OCI-LY7 (cell line): ENCODE measurements at regions of chr3 and their contacts with region 1.

Region 1: GRCh38 chr3:170357176-170357919 is at the start of gene SKIL:
- DNase-seq: peak; percentile 97
- H3K4me3 ChIP-seq: peak within 1 kb of the TSS; percentile 97
- H3K27ac ChIP-seq: peak within 1 kb of the TSS; percentile 94
- H3K4me1 ChIP-seq: peaks cover 54% of the 10 kb centered on the region
- CTCF ChIP-seq: no peak
- total RNA-seq, gene SKIL: 60.9 and 82.6 TPM in 2 replicates

Region 2: GRCh38 chr3:169772897-169773828 is 584.2 kb before region 1 on chr3 and contains the start of gene MYNN:
- CTCF ChIA-PET with region 1: no interaction called
- POLR2A ChIA-PET with region 1: interaction called, 5 read pairs
- intact Hi-C with region 1: loop called (anchors 2 kb)
- DNase-seq: peak; percentile 93
- H3K4me3 ChIP-seq: peak within 1 kb of the TSS; percentile 84
- H3K27ac ChIP-seq: peak within 1 kb of the TSS; percentile 92
- H3K4me1 ChIP-seq: peaks cover 31% of the 10 kb centered on the region
- CTCF ChIP-seq: peak; percentile 50
- total RNA-seq, gene MYNN: 12.0 and 13.1 TPM in 2 replicates

Region 3: GRCh38 chr3:169966428-169966950 is 390.9 kb before region 1 on chr3 and contains the start of gene SEC62:
- CTCF ChIA-PET with region 1: no interaction called
- POLR2A ChIA-PET with region 1: interaction called, 4 read pairs
- intact Hi-C with region 1: loop called (anchors 2 kb)
- DNase-seq: peak; percentile 97
- H3K4me3 ChIP-seq: peak within 1 kb of the TSS; percentile 81
- H3K27ac ChIP-seq: peak within 1 kb of the TSS; percentile 88
- H3K4me1 ChIP-seq: peaks cover 67% of the 10 kb centered on the region
- CTCF ChIP-seq: peak; percentile 78
- total RNA-seq, gene SEC62: 64.5 and 77.4 TPM in 2 replicates

Region 4: DNA sequence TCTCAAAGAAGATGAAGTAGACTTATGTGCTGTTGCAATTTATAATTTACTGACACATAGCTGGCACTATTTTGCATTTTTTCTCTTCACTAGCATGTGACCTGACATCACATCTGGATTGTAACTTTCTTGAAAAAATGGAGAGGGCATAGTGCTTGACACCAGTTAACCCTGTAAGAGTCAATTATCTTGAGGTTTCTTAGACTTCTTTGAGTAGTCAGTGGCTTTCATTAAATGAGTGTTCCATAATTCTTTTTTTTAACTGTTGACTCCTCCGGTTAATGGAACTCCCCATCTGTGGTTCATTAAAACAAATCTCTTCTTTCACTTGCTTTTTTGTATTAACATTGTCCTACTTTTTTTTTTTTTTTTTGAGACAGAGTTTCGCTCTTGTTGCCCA is 152.0 kb before region 1 on chr3:
- CTCF ChIA-PET with region 1: no interaction called
- POLR2A ChIA-PET with region 1: no interaction called
- intact Hi-C with region 1: no loop called
- DNase-seq: no peak
- H3K4me3 ChIP-seq: no peak overlapping the region
- H3K27ac ChIP-seq: no peak overlapping the region
- H3K4me1 ChIP-seq: no peaks in the 10 kb centered on the region
- CTCF ChIP-seq: no peak

Region 5: DNA sequence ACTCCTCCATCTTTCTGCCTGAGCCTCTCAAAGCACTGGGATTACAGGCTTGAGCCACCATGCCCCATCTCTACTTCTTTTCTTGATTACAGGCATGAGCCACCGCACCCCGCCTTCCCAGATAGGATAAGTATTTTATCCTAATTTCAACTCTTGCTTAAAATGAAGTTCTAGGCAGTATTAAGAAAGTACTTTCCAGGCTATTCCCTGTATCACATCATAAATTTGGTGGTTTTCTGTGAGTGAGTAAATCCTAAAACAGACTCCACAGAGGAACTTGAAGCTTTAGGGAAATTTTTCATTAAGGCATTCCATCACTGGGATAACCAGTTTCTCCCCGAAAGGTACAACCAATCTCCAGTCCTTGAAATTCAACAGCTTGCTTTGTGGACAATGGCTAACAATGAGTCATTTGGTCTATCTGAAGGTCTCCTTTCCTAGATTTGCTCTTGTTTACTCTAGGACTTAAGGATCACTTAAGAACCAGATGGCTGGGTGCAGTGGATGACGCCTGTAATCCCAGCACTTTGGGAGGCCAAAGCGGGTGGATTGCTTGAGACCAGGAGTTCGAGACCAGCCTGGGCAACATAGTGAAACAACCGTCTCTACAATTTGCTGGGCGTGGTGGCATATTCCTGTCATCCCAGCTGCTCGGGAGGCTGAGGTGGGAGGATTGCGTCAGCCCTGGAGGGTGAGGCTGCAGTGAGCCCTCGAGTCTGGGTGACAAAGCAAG is 49.5 kb before region 1 on chr3:
- CTCF ChIA-PET with region 1: no interaction called
- POLR2A ChIA-PET with region 1: interaction called, 3 read pairs
- intact Hi-C with region 1: loop called (anchors 2 kb)
- DNase-seq: no peak
- H3K4me3 ChIP-seq: no peak overlapping the region
- H3K27ac ChIP-seq: no peak overlapping the region
- H3K4me1 ChIP-seq: no peaks in the 10 kb centered on the region
- CTCF ChIP-seq: no peak

Region 6: DNA sequence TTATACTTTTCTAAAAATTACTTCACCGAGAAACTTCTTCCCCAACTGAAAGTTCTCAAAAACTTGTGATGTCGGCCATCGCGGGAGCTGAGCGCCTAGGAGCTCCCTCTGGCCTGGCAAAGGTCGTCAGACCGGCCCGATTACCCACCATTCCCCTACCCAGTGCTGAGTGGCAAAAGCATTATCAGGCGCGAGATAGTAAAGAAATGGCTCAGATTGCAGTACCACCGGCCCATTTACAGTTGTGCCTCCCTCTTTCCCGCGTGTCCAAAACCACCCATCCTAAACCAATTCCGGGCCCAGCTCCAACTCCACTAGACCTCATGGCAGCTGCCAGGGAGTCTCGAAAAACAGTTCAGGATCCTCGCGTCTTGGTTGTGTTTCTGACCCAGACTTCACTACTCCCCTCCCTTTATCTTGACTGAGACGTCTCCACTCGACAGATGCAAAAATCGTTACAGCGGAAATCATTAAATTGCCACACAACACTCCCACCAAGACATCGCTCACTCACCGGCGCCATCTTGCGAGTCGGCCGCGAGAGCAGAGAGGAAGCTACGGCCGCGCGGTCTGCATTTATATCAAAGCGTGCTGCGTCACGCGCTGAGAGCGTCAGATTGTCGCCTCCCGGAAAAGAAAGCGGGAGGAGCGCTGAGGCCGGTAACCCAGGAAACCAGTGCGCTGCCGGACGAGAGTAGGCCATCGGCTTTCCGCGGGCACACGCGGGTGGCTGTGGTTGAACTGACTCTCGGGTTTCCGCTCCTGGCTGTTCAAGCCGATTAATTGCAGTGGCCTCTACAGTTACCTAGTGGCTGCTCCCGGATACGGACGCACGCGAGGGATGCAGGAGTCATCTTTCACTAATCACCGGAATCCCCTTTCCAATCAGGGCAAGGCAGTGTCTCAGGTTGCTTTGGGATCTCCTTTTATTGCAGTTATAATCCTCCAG is 512.6 kb after region 1 on chr3 and contains the start of gene RPL22L1:
- CTCF ChIA-PET with region 1: interaction called, 3 read pairs
- POLR2A ChIA-PET with region 1: interaction called, 3 read pairs
- intact Hi-C with region 1: loop called (anchors 5 kb)
- DNase-seq: peak; percentile 97
- H3K4me3 ChIP-seq: peak within 1 kb of the TSS; percentile 97
- H3K27ac ChIP-seq: peak within 1 kb of the TSS; percentile 90
- H3K4me1 ChIP-seq: peaks cover 27% of the 10 kb centered on the region
- CTCF ChIP-seq: peak; percentile 31; the same call in 1 of the 2 replicates
- total RNA-seq, gene RPL22L1: 32.9 and 51.7 TPM in 2 replicates